Endothelial cell of umbilical vein (primary cell): ENCODE measurements at regions of chr6 and their contacts with region 1.

Region 1: GRCh38 chr6:87929843-87930288 is 117.8 kb upstream of the SPACA1 start:
- DNase-seq: peak; percentile 77
- H3K4me3 ChIP-seq: no peak overlapping the region
- H3K27ac ChIP-seq: no peak overlapping the region
- H3K4me1 ChIP-seq: no peaks in the 10 kb centered on the region
- H3K27me3 ChIP-seq: peaks cover 7 to 9% of the 10 kb centered on the region in 2 experiments
- CTCF ChIP-seq: peak; percentile 88
- POLR2A ChIP-seq: no peak

Region 2: GRCh38 chr6:87909849-87910248 is 20.0 kb before region 1 on chr6:
- CTCF ChIA-PET with region 1: interaction called, 14 read pairs
- POLR2A ChIA-PET with region 1: no interaction called
- dilution Hi-C with region 1: no loop called
- intact Hi-C with region 1: no loop called
- DNase-seq: peak; percentile 86
- H3K4me3 ChIP-seq: no peak overlapping the region
- H3K27ac ChIP-seq: peak overlapping the region; percentile 67
- H3K4me1 ChIP-seq: peaks cover 18% of the 10 kb centered on the region
- H3K27me3 ChIP-seq: no peaks in the 10 kb centered on the region
- CTCF ChIP-seq: no peak
- POLR2A ChIP-seq: no peak

Region 3: DNA sequence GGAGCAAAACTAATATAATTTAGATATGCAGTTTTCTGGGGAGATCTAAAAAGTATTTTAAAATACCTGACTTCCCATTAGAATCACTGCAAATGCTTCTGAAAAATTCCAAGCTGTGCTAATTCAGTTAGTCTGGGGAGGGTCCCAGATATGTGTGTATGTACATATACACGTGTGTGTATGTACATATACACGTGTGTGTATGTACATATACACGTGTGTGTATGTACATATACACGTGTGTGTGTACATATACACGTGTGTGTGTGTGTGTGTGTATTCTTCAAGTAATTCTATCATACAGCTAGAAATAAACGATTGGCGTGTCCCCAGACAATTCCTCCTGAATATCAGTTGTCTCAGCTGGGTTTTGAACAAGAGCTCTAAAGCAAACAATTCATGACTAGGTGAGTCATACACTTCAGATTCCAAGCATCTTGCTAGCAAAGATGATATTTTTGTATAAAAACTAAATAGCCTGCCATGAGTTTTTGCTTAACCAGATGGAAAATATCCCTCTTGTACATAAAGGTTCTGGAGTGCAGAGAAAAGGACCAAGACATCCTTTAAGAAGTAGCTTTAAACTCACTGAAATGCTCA is 176.0 kb after region 1 on chr6:
- CTCF ChIA-PET with region 1: no interaction called
- POLR2A ChIA-PET with region 1: interaction called, 10 read pairs
- dilution Hi-C with region 1: no loop called
- intact Hi-C with region 1: no loop called
- DNase-seq: no peak
- H3K4me3 ChIP-seq: no peak overlapping the region
- H3K27ac ChIP-seq: no peak overlapping the region
- H3K4me1 ChIP-seq: no peaks in the 10 kb centered on the region
- H3K27me3 ChIP-seq: no peaks in the 10 kb centered on the region
- CTCF ChIP-seq: no peak
- POLR2A ChIP-seq: no peak

Region 4: GRCh38 chr6:88454658-88455224 is 524.9 kb after region 1 on chr6:
- CTCF ChIA-PET with region 1: no interaction called
- POLR2A ChIA-PET with region 1: no interaction called
- dilution Hi-C with region 1: loop called (anchors 25 kb)
- intact Hi-C with region 1: no loop called
- DNase-seq: no peak
- H3K4me3 ChIP-seq: no peak overlapping the region
- H3K27ac ChIP-seq: no peak overlapping the region
- H3K4me1 ChIP-seq: no peaks in the 10 kb centered on the region
- H3K27me3 ChIP-seq: no peaks in the 10 kb centered on the region
- CTCF ChIP-seq: no peak
- POLR2A ChIP-seq: no peak

Region 5: GRCh38 chr6:88492824-88493223 is 563.0 kb after region 1 on chr6:
- CTCF ChIA-PET with region 1: interaction called, 53 read pairs
- POLR2A ChIA-PET with region 1: no interaction called
- dilution Hi-C with region 1: no loop called
- intact Hi-C with region 1: loop called (anchors 1 kb)
- DNase-seq: peak; percentile 41
- H3K4me3 ChIP-seq: no peak overlapping the region
- H3K27ac ChIP-seq: peak overlapping the region; percentile 11
- H3K4me1 ChIP-seq: peaks cover 4% of the 10 kb centered on the region
- H3K27me3 ChIP-seq: no peaks in the 10 kb centered on the region
- CTCF ChIP-seq: peak; percentile 40
- POLR2A ChIP-seq: no peak

Region 6: DNA sequence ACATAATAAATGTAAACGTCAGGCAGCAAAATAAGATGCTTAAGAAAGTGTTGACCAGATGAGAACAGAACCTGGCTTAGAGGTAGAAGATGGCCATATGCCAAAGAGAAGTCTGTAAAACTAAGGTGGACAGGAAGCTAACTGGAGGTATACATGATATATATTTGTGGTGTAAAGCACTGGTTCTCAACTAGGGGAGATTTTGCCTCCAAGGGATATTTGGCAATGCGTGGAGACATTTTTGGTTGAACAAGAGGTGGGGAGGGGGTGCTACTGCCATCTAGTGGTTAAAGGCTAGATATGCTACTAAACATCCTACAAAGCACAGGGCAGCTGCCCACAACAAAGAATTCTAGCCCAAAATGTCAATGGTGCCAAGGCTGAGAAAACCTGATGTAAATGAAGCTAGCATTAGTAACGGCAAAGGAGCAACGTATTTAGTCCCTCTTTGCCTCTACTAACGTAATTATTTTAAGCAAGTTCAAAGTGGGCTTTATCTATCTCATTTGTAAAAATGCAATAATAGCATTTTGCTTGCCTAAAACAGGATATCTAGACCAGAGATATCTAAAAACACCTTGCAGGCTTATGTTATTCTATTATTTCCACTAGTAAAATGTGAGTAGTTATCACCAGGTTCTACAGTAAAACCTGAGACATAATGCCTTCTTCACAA is 851.0 kb after region 1 on chr6:
- CTCF ChIA-PET with region 1: interaction called, 19 read pairs
- POLR2A ChIA-PET with region 1: no interaction called
- dilution Hi-C with region 1: no loop called
- intact Hi-C with region 1: loop called (anchors 1 kb)
- DNase-seq: peak; percentile 67
- H3K4me3 ChIP-seq: no peak overlapping the region
- H3K27ac ChIP-seq: no peak overlapping the region
- H3K4me1 ChIP-seq: no peaks in the 10 kb centered on the region
- H3K27me3 ChIP-seq: no peaks in the 10 kb centered on the region
- CTCF ChIP-seq: peak; percentile 76 to 88
- POLR2A ChIP-seq: no peak